ENCODE measurements at regions of chr2 and their contacts with region 1.

Region 1: DNA sequence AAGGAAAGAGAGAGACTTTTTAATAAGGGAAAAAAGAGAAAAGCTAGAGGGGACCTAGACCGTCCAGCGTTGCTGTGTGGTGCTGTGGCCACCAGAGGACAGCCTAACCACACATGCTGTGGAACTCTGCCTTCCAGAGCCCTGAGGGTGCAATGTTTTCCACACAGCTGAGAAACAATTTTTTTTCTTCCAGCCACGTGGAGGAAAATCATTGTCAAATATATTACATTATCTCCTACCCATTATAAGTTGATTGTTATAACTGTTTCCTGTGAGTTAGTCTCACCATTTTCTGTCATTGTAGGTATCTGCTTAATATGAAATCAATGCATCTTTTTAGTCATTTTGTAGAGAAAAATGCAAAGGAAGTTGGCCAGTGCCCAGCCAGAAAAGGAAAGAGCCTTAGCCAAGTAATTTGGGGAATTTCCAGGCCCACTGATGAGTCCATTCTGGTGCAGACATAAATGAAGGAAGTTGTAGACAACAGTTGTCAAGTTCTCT is 5.9 kb upstream of the MRPL19 start:
- DNase-seq: peak; percentile 68 to 72
- ATAC-seq: peak; percentile 60 to 79
- H3K4me3 ChIP-seq: no peak overlapping the region
- H3K27ac ChIP-seq: peak overlapping the region; percentile 87 to 92 (median 88)
- H3K4me1 ChIP-seq: peaks cover 31 to 42% of the 10 kb centered on the region in 2 donors
- H3K27me3 ChIP-seq: no peaks in the 10 kb centered on the region
- CTCF ChIP-seq: peak; percentile 96 to 100 (median 99)
- POLR2A ChIP-seq: no peak

Region 2: DNA sequence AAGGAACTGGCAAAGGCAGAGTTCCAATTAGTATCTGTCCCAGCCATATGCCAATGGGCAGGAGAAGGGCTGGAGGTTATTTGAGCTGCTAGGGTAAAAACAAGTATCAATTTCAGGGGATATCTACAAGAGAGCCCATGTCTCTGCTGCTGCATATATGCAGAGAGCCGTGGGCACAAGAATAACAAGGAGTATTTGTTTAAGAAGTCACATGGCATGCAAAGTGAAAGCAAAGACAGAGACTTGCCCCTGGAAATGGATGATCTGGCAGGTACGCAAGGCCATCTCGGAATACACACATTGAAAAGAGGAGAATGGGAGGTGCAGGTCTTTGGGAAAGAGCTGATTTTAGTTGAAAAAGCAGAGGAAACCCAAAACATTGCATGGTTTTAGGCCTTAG is 250.5 kb before region 1 on chr2:
- in situ Hi-C with region 1: no loop called
- intact Hi-C with region 1: no loop called
- DNase-seq: no peak
- ATAC-seq: no peak
- H3K4me3 ChIP-seq: no peak overlapping the region
- H3K27ac ChIP-seq: no peak overlapping the region
- H3K4me1 ChIP-seq: no peaks in the 10 kb centered on the region
- H3K27me3 ChIP-seq: no peaks in the 10 kb centered on the region
- CTCF ChIP-seq: no peak
- POLR2A ChIP-seq: no peak

Region 3: GRCh38 chr2:75676464-75676863 is 35.8 kb after region 1 on chr2:
- in situ Hi-C with region 1: loop called in 3 of 4 experiments (anchors 5 kb)
- intact Hi-C with region 1: loop called (anchors 1 kb)
- DNase-seq: no peak
- ATAC-seq: no peak
- H3K4me3 ChIP-seq: no peak overlapping the region
- H3K27ac ChIP-seq: peak overlapping the region; percentile 84 to 93 (median 88)
- H3K4me1 ChIP-seq: peaks cover 17 to 34% of the 10 kb centered on the region in 2 donors
- H3K27me3 ChIP-seq: no peaks in the 10 kb centered on the region
- CTCF ChIP-seq: no peak
- POLR2A ChIP-seq: no peak